K562 (cell line): ENCODE measurements at regions of chr7 and their contacts with region 1.

Region 1: GRCh38 chr7:108181073-108181985 is 51.2 kb upstream of the LAMB4 start:
- DNase-seq: peak; percentile 55 to 75 (median 68)
- ATAC-seq: peak; percentile 81
- H3K4me3 ChIP-seq: no peak overlapping the region
- H3K27ac ChIP-seq: no peak overlapping the region
- H3K4me1 ChIP-seq: peaks cover 2 to 4% of the 10 kb centered on the region in 2 experiments; a peak in 2 of 5 replicates
- H3K27me3 ChIP-seq: peaks cover 0 to 5% of the 10 kb centered on the region in 2 experiments; a peak in 1 of 5 replicates
- CTCF ChIP-seq: peak; percentile 55 to 91 (median 74); a peak in 5 of 6 replicates
- EP300 ChIP-seq: peak; percentile 23; the same call in 1 of the 2 replicates
- POLR2A ChIP-seq: no peak
- RAD21 ChIP-seq: peak; percentile 93 to 94

Region 2: GRCh38 chr7:108203537-108203936 is 22.2 kb after region 1 on chr7:
- CTCF ChIA-PET with region 1: no interaction called
- POLR2A ChIA-PET with region 1: no interaction called
- in situ Hi-C with region 1: no loop called
- intact Hi-C with region 1: no loop called
- DNase-seq: no peak
- ATAC-seq: peak; percentile 38
- H3K4me3 ChIP-seq: no peak overlapping the region
- H3K27ac ChIP-seq: no peak overlapping the region
- H3K4me1 ChIP-seq: peaks cover 0 to 4% of the 10 kb centered on the region in 2 experiments; a peak in 2 of 5 replicates
- H3K27me3 ChIP-seq: no peaks in the 10 kb centered on the region
- CTCF ChIP-seq: no peak
- EP300 ChIP-seq: no peak
- POLR2A ChIP-seq: no peak
- RAD21 ChIP-seq: no peak

Region 3: GRCh38 chr7:108263425-108263824 is 82.1 kb after region 1 on chr7:
- CTCF ChIA-PET with region 1: no interaction called
- POLR2A ChIA-PET with region 1: no interaction called
- in situ Hi-C with region 1: no loop called
- intact Hi-C with region 1: loop called (anchors 10 kb)
- DNase-seq: no peak
- ATAC-seq: peak; percentile 40
- H3K4me3 ChIP-seq: no peak overlapping the region
- H3K27ac ChIP-seq: no peak overlapping the region
- H3K4me1 ChIP-seq: no peaks in the 10 kb centered on the region; a peak in 1 of 5 replicates
- H3K27me3 ChIP-seq: peaks cover 3 to 9% of the 10 kb centered on the region in 2 experiments; a peak in 2 of 5 replicates
- CTCF ChIP-seq: no peak
- EP300 ChIP-seq: no peak
- POLR2A ChIP-seq: no peak
- RAD21 ChIP-seq: no peak

Region 4: GRCh38 chr7:108368466-108368865 is 187.1 kb after region 1 on chr7:
- CTCF ChIA-PET with region 1: no interaction called
- POLR2A ChIA-PET with region 1: no interaction called
- in situ Hi-C with region 1: no loop called
- intact Hi-C with region 1: loop called (anchors 5 kb)
- DNase-seq: no peak
- ATAC-seq: no peak
- H3K4me3 ChIP-seq: no peak overlapping the region
- H3K27ac ChIP-seq: no peak overlapping the region
- H3K4me1 ChIP-seq: no peaks in the 10 kb centered on the region
- H3K27me3 ChIP-seq: peaks cover under 1 to 2% of the 10 kb centered on the region in 2 experiments; a peak in 1 of 5 replicates
- CTCF ChIP-seq: no peak
- EP300 ChIP-seq: no peak
- POLR2A ChIP-seq: no peak
- RAD21 ChIP-seq: no peak

Region 5: GRCh38 chr7:108384721-108385481 is 203.6 kb after region 1 on chr7:
- CTCF ChIA-PET with region 1: no interaction called
- POLR2A ChIA-PET with region 1: no interaction called
- in situ Hi-C with region 1: no loop called
- intact Hi-C with region 1: loop called (anchors 2 kb)
- DNase-seq: peak in 1 of 4 experiments; percentile 27
- ATAC-seq: peak; percentile 92
- H3K4me3 ChIP-seq: no peak overlapping the region
- H3K27ac ChIP-seq: no peak overlapping the region
- H3K4me1 ChIP-seq: no peaks in the 10 kb centered on the region
- H3K27me3 ChIP-seq: peaks cover 2 to 9% of the 10 kb centered on the region in 2 experiments; a peak in 1 of 5 replicates
- CTCF ChIP-seq: peak; percentile 15 to 57 (median 54); a peak in 3 of 6 replicates
- EP300 ChIP-seq: no peak
- POLR2A ChIP-seq: no peak
- RAD21 ChIP-seq: peak in 1 of 2 experiments; percentile 58; a peak in 3 of 4 replicates

Region 6: GRCh38 chr7:108459931-108460551 is 278.7 kb after region 1 on chr7:
- CTCF ChIA-PET with region 1: interaction called, 25 read pairs
- POLR2A ChIA-PET with region 1: interaction called, 3 read pairs
- in situ Hi-C with region 1: no loop called
- intact Hi-C with region 1: loop called (anchors 1 kb)
- DNase-seq: peak; percentile 29 to 67 (median 45)
- ATAC-seq: peak; percentile 87
- H3K4me3 ChIP-seq: no peak overlapping the region
- H3K27ac ChIP-seq: no peak overlapping the region
- H3K4me1 ChIP-seq: peaks cover 0 to 15% of the 10 kb centered on the region in 2 experiments; a peak in 2 of 5 replicates
- H3K27me3 ChIP-seq: peaks cover 40 to 42% of the 10 kb centered on the region in 2 experiments
- CTCF ChIP-seq: peak; percentile 64 to 83 (median 77)
- EP300 ChIP-seq: no peak
- POLR2A ChIP-seq: no peak
- RAD21 ChIP-seq: peak; percentile 74 to 87

Region 7: GRCh38 chr7:108486291-108486966 is 305.1 kb after region 1 on chr7:
- CTCF ChIA-PET with region 1: no interaction called
- POLR2A ChIA-PET with region 1: interaction called, 5 read pairs
- in situ Hi-C with region 1: loop called (anchors 10 kb)
- intact Hi-C with region 1: loop called (anchors 2 kb)
- DNase-seq: no peak
- ATAC-seq: no peak
- H3K4me3 ChIP-seq: no peak overlapping the region
- H3K27ac ChIP-seq: no peak overlapping the region
- H3K4me1 ChIP-seq: peaks cover 0 to 11% of the 10 kb centered on the region in 2 experiments; a peak in 4 of 5 replicates
- H3K27me3 ChIP-seq: no peaks in the 10 kb centered on the region
- CTCF ChIP-seq: no peak
- EP300 ChIP-seq: no peak
- POLR2A ChIP-seq: no peak
- RAD21 ChIP-seq: no peak

Region 8: DNA sequence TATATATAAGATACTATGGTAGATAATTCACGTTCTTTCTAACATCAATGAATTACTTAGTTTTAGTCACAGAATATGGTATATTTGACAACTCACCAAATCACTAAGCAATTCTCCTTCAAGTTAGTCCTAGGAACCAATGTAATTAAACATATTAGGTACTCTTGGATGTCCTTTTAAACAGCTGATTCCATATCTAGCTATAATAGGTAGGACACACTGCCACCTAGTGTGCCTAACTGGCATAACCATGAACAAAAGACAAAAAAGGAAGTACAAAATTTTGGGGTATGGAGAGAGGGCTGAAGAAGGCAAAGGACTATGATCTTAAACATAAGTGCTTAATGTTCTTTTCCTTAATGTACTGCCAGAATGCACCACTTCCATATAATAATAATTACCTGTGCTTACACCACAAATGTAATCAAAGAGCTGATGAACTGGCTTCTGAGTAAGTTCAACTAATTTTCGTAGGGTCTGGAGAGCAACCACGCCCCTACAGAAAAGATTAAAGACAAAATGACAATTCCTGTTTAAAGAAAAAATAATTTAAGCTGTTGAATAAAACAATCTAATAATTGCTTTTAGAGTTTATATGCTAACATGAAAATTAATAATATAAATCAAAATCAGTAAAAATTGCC is 315.9 kb after region 1 on chr7:
- CTCF ChIA-PET with region 1: interaction called, 29 read pairs
- POLR2A ChIA-PET with region 1: no interaction called
- in situ Hi-C with region 1: no loop called
- intact Hi-C with region 1: loop called (anchors 1 kb)
- DNase-seq: peak; percentile 70 to 82 (median 70)
- ATAC-seq: peak; percentile 91
- H3K4me3 ChIP-seq: no peak overlapping the region
- H3K27ac ChIP-seq: no peak overlapping the region
- H3K4me1 ChIP-seq: no peaks in the 10 kb centered on the region
- H3K27me3 ChIP-seq: no peaks in the 10 kb centered on the region
- CTCF ChIP-seq: peak; percentile 76 to 95 (median 87)
- EP300 ChIP-seq: no peak
- POLR2A ChIP-seq: no peak
- RAD21 ChIP-seq: peak; percentile 92 to 93